Motor neuron (in vitro differentiated cells): ENCODE measurements at regions of chr16 and their contacts with region 1.

Region 1: DNA sequence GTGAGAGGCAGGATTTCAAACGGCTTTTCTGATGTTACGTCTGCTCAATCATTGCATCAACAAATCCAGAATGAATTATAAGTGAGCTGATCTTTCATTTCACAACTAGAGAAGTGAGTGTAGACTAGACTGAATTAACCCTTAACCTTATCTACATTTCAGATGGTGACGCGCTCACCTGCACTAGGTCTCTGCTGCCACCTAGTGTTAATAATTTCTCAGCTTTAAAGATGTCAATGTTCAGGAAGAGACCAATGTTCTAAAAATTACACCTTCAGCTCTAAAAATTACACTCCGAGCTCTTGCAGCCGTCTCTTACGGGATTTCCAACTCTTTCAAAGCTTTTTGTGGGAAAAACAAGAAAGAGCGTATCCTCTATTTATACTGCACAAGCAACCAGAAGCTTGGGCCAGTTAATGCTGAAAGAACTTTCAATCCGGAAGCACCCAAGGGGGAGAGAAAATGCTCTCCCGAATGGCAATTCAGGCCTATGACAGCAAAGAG is 88.2 kb upstream of the FA2H start:
- ATAC-seq: peak in 6 of 8 experiments; percentile 44 to 72 (median 55)
- H3K4me3 ChIP-seq: no peak overlapping the region
- H3K27ac ChIP-seq: no peak overlapping the region
- H3K4me1 ChIP-seq: peaks cover 6 to 11% of the 10 kb centered on the region in 2 donors

Region 2: GRCh38 chr16:74480141-74481029 is 382.4 kb before region 1 on chr16:
- in situ Hi-C with region 1: no loop called
- ATAC-seq: peak in 3 of 8 experiments; percentile 98 to 99 (median 98)
- H3K4me3 ChIP-seq: no peak overlapping the region
- H3K27ac ChIP-seq: no peak overlapping the region
- H3K4me1 ChIP-seq: no peaks in the 10 kb centered on the region

Region 3: DNA sequence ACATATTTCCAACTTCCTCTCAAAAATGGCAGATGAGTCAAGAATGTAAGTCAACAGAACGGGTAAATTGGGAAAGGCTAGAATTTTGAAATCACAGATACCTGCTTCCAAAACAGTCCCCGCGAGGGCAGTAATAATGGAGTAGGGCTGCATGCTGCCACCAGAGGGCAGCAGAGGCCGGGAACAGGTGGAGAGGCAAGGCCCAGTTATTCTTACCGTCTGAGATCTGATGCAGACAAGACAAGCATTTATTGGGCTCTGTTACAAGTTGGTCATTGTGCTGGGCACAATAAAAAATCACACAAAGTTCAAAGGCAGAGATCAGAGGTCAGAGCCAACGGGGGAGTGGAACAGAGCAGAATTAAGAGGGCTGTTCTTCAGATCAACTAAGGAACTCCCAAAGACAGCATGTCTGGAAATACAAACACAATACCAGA is 153.3 kb before region 1 on chr16:
- in situ Hi-C with region 1: loop called in 7 of 9 experiments (anchors 10 to 25 kb)
- ATAC-seq: peak; percentile 92 to 99 (median 98)
- H3K4me3 ChIP-seq: no peak overlapping the region
- H3K27ac ChIP-seq: no peak overlapping the region
- H3K4me1 ChIP-seq: no peaks in the 10 kb centered on the region